ENCODE measurements at regions of chr14 and their contacts with region 1.

Region 1: DNA sequence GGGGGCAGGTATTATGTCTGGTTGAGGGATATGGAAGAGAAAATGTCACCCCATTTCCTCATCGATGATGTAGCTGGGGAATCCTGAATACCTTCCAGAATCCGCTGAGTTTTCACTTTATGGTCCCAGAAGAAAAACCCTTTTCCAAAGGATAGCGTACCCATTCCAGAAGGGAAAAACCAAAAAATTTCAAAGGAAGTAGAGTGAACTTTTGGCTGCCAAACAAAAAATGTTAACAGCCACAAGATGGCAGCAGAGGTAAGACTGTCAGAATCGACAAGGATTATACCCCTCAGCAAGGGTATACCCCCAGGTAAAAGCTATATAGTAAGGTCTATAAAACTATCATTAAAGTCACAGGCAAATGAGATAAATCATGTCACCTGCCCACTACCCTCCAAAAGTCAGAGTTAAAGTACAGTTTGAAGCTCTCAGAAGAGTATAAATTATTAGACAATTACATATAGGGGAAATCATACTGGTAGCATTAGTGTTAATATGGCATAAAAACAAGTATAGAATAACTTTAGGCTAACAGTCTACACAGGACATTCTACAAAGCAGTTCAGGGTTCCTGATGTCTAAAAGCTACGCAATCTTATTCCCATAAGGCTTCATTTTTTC is 18.0 kb downstream of the ACIN1 start:
- DNase-seq: no peak
- H3K4me3 ChIP-seq: no peak overlapping the region
- H3K27ac ChIP-seq: no peak overlapping the region
- H3K4me1 ChIP-seq: peaks cover under 1 to 10% (median 5%) of the 10 kb centered on the region in 4 experiments; a peak in 6 of 7 replicates
- H3K27me3 ChIP-seq: no peaks in the 10 kb centered on the region
- CTCF ChIP-seq: peak in 2 of 3 experiments; percentile 51 to 61; a peak in 3 of 4 replicates
- EP300 ChIP-seq: no peak
- POLR2A ChIP-seq: no peak
- RAD21 ChIP-seq: peak; percentile 41 to 53

Region 2: GRCh38 chr14:22886500-22887259 is 190.2 kb before region 1 on chr14:
- CTCF ChIA-PET with region 1: no interaction called
- POLR2A ChIA-PET with region 1: no interaction called
- DNase-seq: peak in 1 of 2 experiments; percentile 87
- H3K4me3 ChIP-seq: peak overlapping the region; percentile 57 to 83 (median 65)
- H3K27ac ChIP-seq: peak overlapping the region; percentile 25
- H3K4me1 ChIP-seq: peaks cover 7 to 21% (median 12%) of the 10 kb centered on the region in 4 experiments
- H3K27me3 ChIP-seq: peaks cover 0 to 17% (median 11%) of the 10 kb centered on the region in 4 experiments; a peak in 6 of 7 replicates
- CTCF ChIP-seq: peak; percentile 17 to 35 (median 21); a peak in 3 of 4 replicates
- EP300 ChIP-seq: no peak
- POLR2A ChIP-seq: peak in 1 of 2 experiments; percentile 75; a peak in 2 of 3 replicates
- RAD21 ChIP-seq: peak in 1 of 2 experiments; percentile 6; a peak in 2 of 4 replicates

Region 3: DNA sequence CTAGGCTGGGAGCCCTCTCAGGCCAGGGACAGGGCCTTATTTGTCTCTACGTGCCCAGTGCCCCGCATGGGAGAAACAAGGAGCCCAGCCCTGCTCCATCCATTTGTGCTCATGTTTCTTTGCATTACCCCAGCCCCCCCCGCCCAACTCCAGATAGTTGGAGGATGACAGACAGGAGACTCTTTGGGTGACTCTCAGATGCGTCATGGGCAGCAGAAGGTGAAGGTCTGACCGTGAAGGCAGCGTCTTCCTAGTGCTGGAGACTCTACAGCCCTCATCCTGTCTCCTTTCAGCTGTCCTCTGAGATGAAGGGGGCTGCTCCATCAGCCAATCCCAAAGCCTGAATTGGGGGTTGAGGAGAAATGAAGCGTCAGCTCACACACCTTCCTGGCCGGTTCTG is 35.2 kb before region 1 on chr14:
- CTCF ChIA-PET with region 1: interaction called, 10 read pairs
- POLR2A ChIA-PET with region 1: interaction called, 7 read pairs
- DNase-seq: no peak
- H3K4me3 ChIP-seq: no peak overlapping the region
- H3K27ac ChIP-seq: no peak overlapping the region
- H3K4me1 ChIP-seq: 0 out of 7 replicates have a peak, but pooled peaks cover 0 to 5% (median 0%) of the 10 kb centered on the region in 4 experiments
- H3K27me3 ChIP-seq: no peaks in the 10 kb centered on the region
- CTCF ChIP-seq: no peak
- EP300 ChIP-seq: no peak
- POLR2A ChIP-seq: no peak
- RAD21 ChIP-seq: no peak

Region 4: DNA sequence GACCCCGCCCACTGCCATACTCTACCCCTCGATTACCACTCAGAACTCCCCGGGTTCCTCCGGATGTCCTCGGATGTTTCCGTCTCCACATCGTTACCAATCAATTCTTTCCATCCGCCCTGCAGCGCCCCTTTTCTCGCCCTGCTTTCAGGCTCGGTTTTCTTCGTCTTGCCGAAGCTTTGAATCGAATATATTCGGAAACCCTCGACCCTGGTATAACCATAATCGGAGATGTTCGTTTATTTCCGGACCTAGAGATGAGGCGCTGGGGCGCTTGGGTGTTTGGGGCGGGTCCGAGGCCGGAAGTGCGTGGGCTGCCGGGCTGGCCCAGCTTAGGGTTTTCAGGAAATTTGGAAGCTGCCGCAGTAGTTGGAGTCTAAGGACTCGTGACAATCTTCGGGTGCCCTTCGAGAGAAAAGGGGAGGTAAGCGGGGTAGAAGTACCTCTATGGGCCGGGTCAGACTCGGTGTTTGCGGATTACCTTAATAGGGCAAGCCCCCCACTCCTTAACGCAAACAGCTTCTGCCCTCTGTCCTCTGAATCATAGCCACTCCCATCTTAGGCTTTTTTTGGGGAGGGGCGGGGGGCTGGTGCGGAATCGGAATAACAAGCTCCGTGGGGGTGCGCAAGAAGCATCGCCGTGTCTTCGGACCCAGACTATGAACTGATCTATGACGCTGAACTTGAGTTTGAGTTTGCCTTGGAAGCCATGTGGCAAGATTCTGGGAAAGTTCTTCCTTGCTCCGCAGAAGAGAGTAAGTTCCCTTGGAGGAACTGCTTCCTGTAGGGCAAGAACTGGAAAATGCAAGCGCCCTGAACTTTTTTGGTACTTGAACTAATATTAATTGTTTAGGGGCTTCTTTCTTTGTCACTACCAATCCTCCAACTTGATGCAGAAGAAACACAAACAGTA is 18.6 kb after region 1 on chr14 and contains the start of gene C14orf119:
- CTCF ChIA-PET with region 1: interaction called, 56 read pairs
- POLR2A ChIA-PET with region 1: interaction called, 36 read pairs
- DNase-seq: peak in 1 of 2 experiments; percentile 96
- H3K4me3 ChIP-seq: peak within 1 kb of the TSS; percentile 92 to 97 (median 96)
- H3K27ac ChIP-seq: peak within 1 kb of the TSS; percentile 99
- H3K4me1 ChIP-seq: no peaks in the 10 kb centered on the region; a peak in 3 of 7 replicates
- H3K27me3 ChIP-seq: no peaks in the 10 kb centered on the region
- CTCF ChIP-seq: no peak
- EP300 ChIP-seq: no peak
- POLR2A ChIP-seq: no peak; a peak in 1 of 3 replicates
- RAD21 ChIP-seq: no peak
- total RNA-seq, gene C14orf119: 78.1 and 91.2 TPM in 2 replicates

Region 5: DNA sequence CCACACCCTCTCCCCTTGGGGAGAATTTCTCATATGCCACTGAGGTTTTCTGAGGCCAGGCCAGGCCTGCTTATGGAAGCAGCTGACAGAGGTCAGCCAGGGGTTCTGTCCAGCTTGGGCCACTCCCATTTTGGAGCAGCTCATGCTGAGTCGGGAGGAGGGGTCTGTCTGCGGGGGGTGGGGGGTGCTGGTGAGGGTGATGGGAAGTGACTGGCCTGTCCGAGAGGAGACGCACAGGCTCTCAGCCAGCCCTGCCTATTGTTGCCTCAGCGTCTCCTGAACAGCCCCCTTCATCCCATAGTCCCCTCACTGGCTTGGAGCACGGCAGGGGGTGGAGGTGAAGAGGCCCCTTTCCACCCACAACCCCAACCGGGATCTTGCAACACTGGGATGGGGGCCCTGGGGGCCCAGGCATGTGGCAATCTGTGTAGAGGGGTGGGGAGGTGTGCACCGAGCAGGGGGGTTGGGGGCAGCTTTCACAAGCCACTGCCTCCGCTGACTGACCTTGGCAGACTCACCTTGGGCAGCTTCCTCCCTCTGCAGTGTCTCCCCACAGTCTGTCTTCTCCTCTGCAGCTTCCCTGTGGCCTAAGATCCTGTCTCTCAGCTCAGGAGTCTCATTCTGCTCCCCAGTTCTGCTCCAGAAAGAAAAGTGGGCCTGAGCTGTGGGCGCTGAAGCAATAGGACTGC is 36.7 kb after region 1 on chr14:
- CTCF ChIA-PET with region 1: interaction called, 12 read pairs
- POLR2A ChIA-PET with region 1: interaction called, 10 read pairs
- DNase-seq: no peak
- H3K4me3 ChIP-seq: 0 out of 8 replicates have a peak overlapping the region, but pooled peaks of 1 of the 4 experiments have one; percentile 17
- H3K27ac ChIP-seq: no peak overlapping the region
- H3K4me1 ChIP-seq: peaks cover 0 to 14% (median 4%) of the 10 kb centered on the region in 4 experiments; a peak in 6 of 7 replicates
- H3K27me3 ChIP-seq: peaks cover 0 to 3% (median 0%) of the 10 kb centered on the region in 4 experiments; a peak in 2 of 7 replicates
- CTCF ChIP-seq: no peak
- EP300 ChIP-seq: no peak
- POLR2A ChIP-seq: no peak
- RAD21 ChIP-seq: no peak

Measured in H1 (cell line).